Posterior vena cava (tissue), 2 donors: ENCODE measurements at regions of chr15 and their contacts with region 1.

Region 1: GRCh38 chr15:68672781-68673205 is 94.0 kb downstream of the CORO2B start:
- DNase-seq: no peak

Region 2: DNA sequence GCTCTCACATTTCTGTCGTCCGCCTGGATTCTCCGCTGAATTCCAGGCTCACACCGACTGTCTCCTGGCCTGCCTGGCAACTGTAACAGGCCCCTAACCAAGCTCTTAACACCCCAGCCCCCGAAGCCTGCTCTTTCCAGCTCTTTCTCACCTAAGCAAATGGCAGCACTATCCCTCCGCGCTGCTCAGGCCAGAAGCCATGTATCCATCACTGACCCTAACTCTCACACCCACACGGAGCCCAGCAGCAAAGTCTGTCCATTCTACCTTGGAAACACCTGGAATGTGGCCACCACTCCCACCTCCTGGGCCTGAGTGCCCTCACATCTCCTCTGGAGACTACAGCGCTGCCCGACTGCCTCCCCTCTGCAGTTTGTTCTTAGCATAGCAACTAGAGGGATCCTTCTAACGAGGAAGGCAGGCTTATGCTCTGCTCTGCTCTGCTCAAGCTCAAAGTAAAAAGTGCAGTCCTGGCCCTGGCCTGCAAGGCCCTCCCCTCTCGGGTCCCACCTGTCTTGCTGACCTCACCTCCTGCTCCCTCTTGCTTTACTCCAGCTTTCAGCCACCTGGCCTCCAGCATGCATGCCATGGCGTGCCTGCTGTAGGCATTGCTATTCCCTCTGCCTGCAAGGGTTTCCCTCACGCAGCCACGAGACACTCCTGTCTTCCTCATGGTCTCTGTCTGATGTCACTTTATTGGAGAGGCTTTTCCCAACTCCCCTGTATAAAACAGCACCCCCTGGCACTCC is 368.0 kb before region 1 on chr15:
- intact Hi-C with region 1: loop called in 1 of 2 experiments (anchors 10 kb)
- DNase-seq: peak; percentile 77

Region 3: GRCh38 chr15:68550481-68551295 is 122.1 kb before region 1 on chr15:
- intact Hi-C with region 1: loop called (anchors 5 kb)
- DNase-seq: peak; percentile 89

Region 4: DNA sequence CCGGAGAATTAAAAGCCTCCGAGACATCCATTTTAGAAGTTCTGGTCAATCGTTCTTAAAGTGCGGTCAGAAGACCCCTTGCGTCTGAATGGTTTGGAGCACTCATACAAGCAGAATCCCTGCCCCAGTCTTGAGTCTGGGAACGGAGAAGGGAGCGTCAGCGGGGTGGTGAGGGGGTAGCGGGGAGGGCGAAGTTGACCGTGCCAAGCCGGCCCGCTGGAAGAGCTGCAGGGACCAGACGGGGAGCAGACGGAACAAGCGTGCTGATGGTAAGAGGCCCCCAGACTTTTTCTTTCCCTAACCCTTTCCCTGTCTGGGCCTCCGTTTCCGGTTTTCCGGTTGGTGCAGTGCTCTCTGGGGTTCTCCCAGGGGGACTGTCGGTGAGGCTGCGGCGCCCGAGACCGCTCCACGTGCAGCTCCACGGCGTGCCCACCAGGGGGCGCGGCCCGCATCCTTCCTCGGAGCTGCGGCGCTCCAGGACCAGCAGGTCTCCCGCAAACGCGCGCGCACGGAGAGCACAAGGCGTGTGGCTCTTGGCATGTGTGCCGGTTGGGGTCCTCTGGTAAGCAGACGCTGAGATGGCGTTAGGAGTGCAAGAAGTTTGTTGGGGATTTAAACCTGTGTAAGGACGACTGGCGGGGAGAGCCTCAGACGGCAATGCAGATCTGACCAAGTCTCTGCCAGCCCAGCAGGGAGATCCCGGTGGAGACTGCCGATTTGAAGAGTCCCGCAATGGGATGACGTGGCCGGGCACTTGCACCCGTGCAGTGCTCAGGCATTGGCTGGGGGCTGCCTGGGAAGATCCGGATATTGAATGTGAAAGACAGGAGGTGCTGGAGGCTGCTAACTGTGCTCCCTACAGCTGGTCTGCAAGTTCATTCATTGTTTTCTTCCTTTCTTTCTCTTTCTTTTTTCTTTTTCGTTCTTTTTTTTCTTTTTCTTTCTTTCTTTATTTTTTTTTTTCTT is 113.2 kb before region 1 on chr15:
- intact Hi-C with region 1: loop called (anchors 5 kb)
- DNase-seq: peak; percentile 94

Region 5: DNA sequence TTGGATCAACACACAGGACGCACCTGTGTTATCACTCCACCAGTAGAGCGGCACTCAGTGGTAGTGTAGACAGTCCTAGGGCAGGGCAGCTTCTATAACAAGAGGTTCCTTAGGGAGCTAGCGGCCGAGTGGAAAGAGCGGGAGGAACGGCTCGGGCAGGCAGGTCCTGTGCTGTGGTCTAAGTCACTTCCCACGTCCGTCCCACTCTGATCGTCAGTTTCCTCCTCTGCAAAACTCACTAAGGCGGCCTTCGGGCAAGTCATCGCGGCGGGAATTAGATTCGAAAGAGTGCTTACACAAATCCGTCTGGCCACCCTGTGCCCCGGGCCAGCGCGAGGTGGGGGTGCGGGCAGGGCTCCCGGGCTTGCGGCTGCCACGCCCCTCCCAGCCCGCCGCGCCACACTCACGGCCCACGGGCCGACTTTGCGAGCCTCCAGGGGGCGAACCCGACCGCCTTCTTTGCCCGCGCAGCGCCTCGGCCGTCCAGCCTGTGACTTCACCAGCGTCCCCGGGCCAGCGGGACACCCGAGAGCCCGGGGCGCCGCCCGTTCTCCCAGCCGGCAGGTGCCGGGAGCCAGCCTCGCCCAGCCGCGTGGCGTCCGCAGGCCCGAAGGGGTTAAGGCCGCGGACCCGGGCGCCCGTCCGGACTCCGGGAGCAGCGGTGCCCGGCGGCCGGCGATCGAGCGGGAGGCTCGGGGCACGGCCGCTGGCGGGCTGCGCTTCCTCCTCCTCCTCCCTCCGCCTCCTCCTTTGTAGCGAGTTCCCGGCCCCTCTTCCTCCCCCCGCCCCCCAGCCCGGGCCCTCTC is 94.4 kb before region 1 on chr15:
- intact Hi-C with region 1: loop called (anchors 5 kb)
- DNase-seq: peak; percentile 95

Region 6: GRCh38 chr15:68586274-68586961 is 86.4 kb before region 1 on chr15:
- intact Hi-C with region 1: loop called in 1 of 2 experiments (anchors 5 kb)
- DNase-seq: peak; percentile 59

Region 7: GRCh38 chr15:68739390-68740080 is 66.7 kb after region 1 on chr15:
- intact Hi-C with region 1: no loop called
- DNase-seq: no peak